T-cell (primary cell): ENCODE measurements at regions of chr1 and their contacts with region 1.

Region 1: DNA sequence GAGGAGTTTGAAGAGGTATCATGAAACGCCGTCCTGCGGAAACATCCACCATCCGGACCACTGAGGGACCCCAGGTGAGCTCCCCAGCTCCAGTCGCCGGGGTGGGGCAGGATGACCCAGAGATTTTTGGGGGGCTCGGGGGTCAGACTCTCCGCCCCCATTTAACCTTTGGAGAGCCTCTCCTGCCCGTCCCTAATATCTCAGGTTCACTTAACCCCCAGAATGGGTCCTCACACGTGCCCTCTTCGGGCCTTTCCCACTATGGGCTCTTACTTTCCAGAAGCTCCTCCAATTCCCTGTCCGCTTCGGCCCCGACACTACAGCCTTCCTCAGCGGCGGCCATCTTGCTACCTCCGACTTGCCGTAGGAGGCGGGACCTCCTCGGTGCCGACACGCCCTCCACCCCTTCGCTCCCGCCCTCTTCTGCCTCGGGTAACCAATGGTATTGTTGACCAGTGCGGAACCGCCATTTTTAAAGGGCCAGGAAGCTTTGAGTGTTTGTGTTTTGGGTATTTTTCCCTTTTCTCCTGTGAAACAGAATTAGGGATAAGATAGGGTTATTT is at the start of gene PEX19:
- DNase-seq: peak; percentile 85 to 96 (median 91)
- ATAC-seq: peak; percentile 99 to 100 (median 100)
- H3K4me3 ChIP-seq: peak within 1 kb of the TSS; percentile 68 to 69
- H3K4me3 Mint-ChIP-seq: peak within 1 kb of the TSS; percentile 97 to 99 (median 99)
- H3K27ac ChIP-seq: peak within 1 kb of the TSS; percentile 45
- H3K27ac Mint-ChIP-seq: peak within 1 kb of the TSS; percentile 94 to 95
- H3K4me1 ChIP-seq: peaks cover 7 to 23% of the 10 kb centered on the region in 2 experiments
- H3K4me1 Mint-ChIP-seq: peaks cover 28 to 30% (median 28%) of the 10 kb centered on the region in 3 donors
- H3K27me3 ChIP-seq: no peaks in the 10 kb centered on the region
- H3K27me3 Mint-ChIP-seq: no peaks in the 10 kb centered on the region
- total RNA-seq, gene PEX19: 49.8 to 59.5 (median 53.3) TPM

Region 2: GRCh38 chr1:160261893-160262794 is 22.7 kb before region 1 on chr1 and contains the start of gene DCAF8:
- CTCF ChIA-PET with region 1: interaction called, 4 to 9 read pairs
- POLR2A ChIA-PET with region 1: interaction called, 7 to 12 read pairs
- DNase-seq: peak; percentile 95 to 100 (median 98)
- ATAC-seq: peak; percentile 88 to 93 (median 92)
- H3K4me3 ChIP-seq: peak within 1 kb of the TSS; percentile 99
- H3K4me3 Mint-ChIP-seq: peak within 1 kb of the TSS; percentile 97 to 98 (median 97)
- H3K27ac ChIP-seq: peak within 1 kb of the TSS; percentile 99
- H3K27ac Mint-ChIP-seq: peak within 1 kb of the TSS; percentile 98 to 100
- H3K4me1 ChIP-seq: peaks cover 16 to 27% of the 10 kb centered on the region in 2 experiments
- H3K4me1 Mint-ChIP-seq: peaks cover 46 to 53% (median 50%) of the 10 kb centered on the region in 3 donors
- H3K27me3 ChIP-seq: no peaks in the 10 kb centered on the region
- H3K27me3 Mint-ChIP-seq: no peaks in the 10 kb centered on the region
- total RNA-seq, gene DCAF8: 173 to 221 (median 209) TPM

Region 3: GRCh38 chr1:160330129-160330528 is 45.3 kb after region 1 on chr1:
- CTCF ChIA-PET with region 1: no interaction called
- POLR2A ChIA-PET with region 1: no interaction called
- DNase-seq: no peak
- ATAC-seq: no peak
- H3K4me3 ChIP-seq: no peak overlapping the region
- H3K4me3 Mint-ChIP-seq: no peak overlapping the region
- H3K27ac ChIP-seq: no peak overlapping the region
- H3K27ac Mint-ChIP-seq: no peak overlapping the region
- H3K4me1 ChIP-seq: no peaks in the 10 kb centered on the region
- H3K4me1 Mint-ChIP-seq: peaks cover 2 to 14% (median 5%) of the 10 kb centered on the region in 3 donors
- H3K27me3 ChIP-seq: no peaks in the 10 kb centered on the region
- H3K27me3 Mint-ChIP-seq: no peaks in the 10 kb centered on the region